Activated CD4-positive, alpha-beta T cell treated with anti-CD3 and anti-CD28 coated beads, Interleukin-2, amount 10 ng/mL, durations not matched to agents 24 days and 14 days (primary cell): ENCODE measurements at regions of chr1 and their contacts with region 1.

Region 1: DNA sequence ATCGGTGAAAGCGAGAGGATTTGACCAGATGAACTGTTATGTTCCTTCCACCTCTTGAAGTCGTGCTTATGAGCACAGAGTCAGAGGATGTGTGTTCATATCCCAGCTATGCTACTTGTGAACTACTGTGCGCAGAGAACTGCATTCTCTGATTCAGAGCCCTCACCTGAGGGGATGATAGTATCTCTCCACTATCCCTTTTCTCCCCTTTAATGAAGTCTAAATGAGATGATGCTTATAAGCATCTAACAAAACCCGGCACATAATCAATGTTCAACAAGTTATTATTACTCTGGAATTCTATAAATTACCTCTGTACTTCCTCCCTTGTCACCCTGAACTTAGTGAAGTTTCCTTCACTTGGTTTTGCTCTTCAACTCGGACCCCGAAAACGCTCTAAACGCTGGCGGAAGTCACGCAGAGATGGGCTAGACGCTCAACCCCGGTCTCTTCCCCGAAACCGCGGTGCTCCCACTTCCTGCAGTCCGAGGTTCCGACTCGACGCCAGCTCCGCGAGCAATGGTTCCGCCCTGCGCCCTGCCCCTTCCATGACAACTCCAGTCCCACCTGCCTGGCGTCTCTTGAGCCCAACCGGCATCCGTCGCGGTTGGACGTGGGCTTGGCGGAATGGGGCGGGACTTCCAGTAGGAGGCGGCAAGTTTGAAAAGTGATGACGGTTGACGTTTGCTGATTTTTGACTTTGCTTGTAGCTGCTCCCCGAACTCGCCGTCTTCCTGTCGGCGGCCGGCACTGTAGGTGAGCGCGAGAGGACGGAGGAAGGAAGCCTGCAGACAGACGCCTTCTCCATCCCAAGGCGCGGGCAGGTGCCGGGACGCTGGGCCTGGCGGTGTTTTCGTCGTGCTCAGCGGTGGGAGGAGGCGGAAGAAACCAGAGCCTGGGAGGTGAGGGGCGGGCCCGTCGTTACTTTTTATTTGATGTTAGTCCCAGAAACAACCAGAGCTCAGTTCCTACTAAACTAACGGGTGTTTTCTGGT is at the start of gene NUF2:
- DNase-seq: peak; percentile 99
- H3K4me3 Mint-ChIP-seq: peak within 1 kb of the TSS; percentile 90
- H3K27ac Mint-ChIP-seq: peak within 1 kb of the TSS; percentile 94
- H3K4me1 Mint-ChIP-seq: peaks cover 33% of the 10 kb centered on the region
- H3K27me3 Mint-ChIP-seq: no peaks in the 10 kb centered on the region
- total RNA-seq, gene NUF2: 40.6 and 41.9 TPM in 2 replicates

Region 2: DNA sequence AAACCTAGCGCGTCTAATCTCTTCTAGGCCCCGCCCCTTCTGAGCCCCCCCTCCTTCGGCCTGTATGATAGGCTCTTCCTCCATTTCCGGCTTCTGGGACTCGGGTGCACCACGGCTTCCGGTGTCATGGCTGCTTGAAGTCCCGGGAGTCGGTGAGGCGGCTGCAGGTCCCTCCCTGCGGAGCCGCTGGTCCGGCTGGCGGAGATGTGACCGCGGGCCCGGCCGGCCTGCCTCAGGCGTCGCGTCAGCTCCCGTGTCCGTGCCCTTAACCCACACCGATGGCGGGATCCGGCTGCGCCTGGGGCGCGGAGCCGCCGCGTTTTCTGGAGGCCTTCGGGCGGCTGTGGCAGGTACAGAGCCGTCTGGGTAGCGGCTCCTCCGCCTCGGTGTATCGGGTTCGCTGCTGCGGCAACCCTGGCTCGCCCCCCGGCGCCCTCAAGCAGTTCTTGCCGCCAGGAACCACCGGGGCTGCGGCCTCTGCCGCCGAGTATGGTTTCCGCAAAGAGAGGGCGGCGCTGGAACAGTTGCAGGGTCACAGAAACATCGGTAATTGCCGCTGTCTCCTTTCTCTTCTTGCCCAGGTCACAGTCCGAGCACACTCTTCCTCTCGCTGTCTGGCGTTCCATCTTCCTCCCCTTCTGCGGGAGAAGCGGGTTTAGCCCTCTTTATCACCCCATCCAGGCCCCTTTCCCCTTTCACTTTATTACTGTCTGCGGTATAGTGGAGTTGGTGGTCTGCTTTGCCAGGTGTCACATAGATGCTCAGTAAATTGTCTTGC is 823.7 kb before region 1 on chr1 and contains the start of gene UHMK1:
- intact Hi-C with region 1: loop called (anchors 5 kb)
- DNase-seq: peak; percentile 96
- H3K4me3 Mint-ChIP-seq: peak within 1 kb of the TSS; percentile 86
- H3K27ac Mint-ChIP-seq: peak within 1 kb of the TSS; percentile 88
- H3K4me1 Mint-ChIP-seq: peaks cover 28% of the 10 kb centered on the region
- H3K27me3 Mint-ChIP-seq: peaks cover 3% of the 10 kb centered on the region
- total RNA-seq, gene UHMK1: 59.8 and 60.1 TPM in 2 replicates

Region 3: DNA sequence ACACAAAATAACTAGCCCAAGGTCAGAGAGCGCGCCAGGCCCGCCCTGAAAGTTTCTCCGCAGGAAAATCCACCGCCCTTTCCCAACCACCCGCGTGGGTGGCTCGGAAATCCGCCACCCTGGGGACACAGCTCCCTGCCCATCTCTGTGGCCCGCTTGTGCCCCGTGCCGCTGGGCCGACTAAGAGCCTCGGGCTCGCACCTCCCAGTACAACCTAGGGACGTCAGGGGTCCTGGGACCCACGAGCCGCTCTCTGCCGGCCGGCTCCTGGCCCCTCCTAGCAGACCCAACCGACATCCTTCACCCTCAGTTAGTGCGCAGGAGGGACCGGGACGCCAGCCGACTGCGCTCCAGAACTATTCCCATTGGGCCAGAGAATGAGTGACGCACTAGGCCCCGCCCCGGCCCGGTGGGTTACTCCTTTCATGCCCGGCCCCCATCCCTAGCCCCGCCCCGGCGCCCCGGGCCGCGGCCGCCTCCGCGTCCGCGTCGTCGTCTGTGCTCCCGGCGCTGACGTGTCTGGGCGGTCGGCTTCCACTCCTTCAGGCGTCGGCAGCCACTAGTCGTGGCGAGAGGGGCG is 760.5 kb before region 1 on chr1:
- intact Hi-C with region 1: loop called (anchors 5 kb)
- DNase-seq: peak; percentile 99
- H3K4me3 Mint-ChIP-seq: peak overlapping the region; percentile 85
- H3K27ac Mint-ChIP-seq: peak overlapping the region; percentile 93
- H3K4me1 Mint-ChIP-seq: peaks cover 31% of the 10 kb centered on the region
- H3K27me3 Mint-ChIP-seq: no peaks in the 10 kb centered on the region

Region 4: DNA sequence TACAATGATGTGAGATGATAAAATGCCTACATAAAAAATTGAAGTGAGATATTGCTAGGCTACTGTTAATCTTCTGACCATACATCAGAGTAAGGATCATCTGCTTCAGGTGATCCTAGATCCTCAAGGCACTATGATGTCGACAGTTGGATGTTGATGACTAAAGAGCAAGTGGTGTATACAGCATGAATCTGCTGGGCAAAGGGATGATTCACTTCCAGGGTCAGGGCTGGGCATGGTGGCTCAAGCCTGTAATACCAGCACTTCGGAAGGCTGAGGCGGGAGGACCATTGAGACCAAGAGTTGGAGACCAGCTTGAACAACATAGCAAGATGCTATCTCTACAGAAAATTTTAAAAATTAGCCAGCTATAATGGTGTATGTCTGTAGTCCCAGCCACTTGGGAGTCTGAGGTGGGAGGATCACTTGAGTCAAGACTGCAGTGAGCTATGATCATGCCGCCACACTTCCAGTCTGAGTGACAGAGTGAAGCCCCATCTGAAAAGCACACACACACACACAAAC is 24.8 kb after region 1 on chr1:
- intact Hi-C with region 1: no loop called
- DNase-seq: no peak
- H3K4me3 Mint-ChIP-seq: no peak overlapping the region
- H3K27ac Mint-ChIP-seq: no peak overlapping the region
- H3K4me1 Mint-ChIP-seq: peaks cover 2% of the 10 kb centered on the region
- H3K27me3 Mint-ChIP-seq: no peaks in the 10 kb centered on the region